ENCODE measurements at regions of chr2 and their contacts with region 1.

Region 1: DNA sequence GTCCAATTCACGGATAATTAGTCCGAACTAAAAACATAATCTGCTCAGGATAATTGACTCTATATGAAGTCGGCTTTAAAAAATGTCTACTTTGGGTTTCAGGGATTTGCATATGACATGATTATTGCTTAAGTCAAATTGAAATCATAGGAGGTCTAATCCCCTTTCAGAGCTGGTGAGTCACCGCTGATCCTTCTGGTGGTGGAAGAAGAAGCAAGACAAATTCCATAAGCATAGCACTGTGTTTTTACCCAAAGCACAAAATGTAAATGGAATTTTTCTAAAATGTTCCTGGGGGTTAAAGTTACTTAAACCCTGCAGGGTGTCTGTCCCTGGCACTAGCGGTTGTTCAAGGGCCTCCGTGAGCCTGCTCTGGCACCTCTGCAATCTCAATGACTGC is 460.2 kb downstream of the LRATD1 start:
- DNase-seq: no peak
- H3K4me3 ChIP-seq: no peak overlapping the region
- H3K4me3 Mint-ChIP-seq: no peak overlapping the region
- H3K27ac Mint-ChIP-seq: no peak overlapping the region
- H3K4me1 ChIP-seq: no peaks in the 10 kb centered on the region
- H3K4me1 Mint-ChIP-seq: no peaks in the 10 kb centered on the region
- H3K27me3 ChIP-seq: no peaks in the 10 kb centered on the region
- H3K27me3 Mint-ChIP-seq: peaks cover 2% of the 10 kb centered on the region
- CTCF ChIP-seq: no peak

Region 2: DNA sequence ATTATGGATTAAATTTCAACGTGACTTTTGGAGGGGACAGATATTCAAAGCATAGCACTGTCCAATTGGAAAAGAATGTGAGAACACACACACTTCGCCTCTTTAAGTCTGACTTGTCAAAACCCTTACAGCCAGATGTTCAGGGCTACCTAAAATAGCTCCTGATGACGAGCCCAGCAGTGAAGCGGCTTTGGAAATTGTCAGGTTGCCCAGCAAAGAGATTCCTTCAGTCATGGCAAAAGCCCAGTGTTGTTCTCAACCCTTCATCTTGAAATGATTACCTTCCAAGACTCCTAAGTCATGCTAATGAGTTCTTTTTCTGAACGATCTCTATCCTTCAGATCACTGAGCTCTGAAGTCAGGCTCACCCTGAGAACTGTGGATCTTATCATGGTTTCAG is 23.5 kb before region 1 on chr2:
- CTCF ChIA-PET with region 1: no interaction called
- POLR2A ChIA-PET with region 1: no interaction called
- intact Hi-C with region 1: loop called (anchors 1 kb)
- DNase-seq: no peak
- H3K4me3 ChIP-seq: no peak overlapping the region
- H3K4me3 Mint-ChIP-seq: no peak overlapping the region
- H3K27ac Mint-ChIP-seq: no peak overlapping the region
- H3K4me1 ChIP-seq: no peaks in the 10 kb centered on the region
- H3K4me1 Mint-ChIP-seq: no peaks in the 10 kb centered on the region
- H3K27me3 ChIP-seq: no peaks in the 10 kb centered on the region
- H3K27me3 Mint-ChIP-seq: peaks cover 6% of the 10 kb centered on the region
- CTCF ChIP-seq: no peak